Panc1 (cell line): ENCODE measurements at regions of chr9 and their contacts with region 1.

Region 1: GRCh38 chr9:27505744-27506161 is 18.3 kb upstream of the IFNK start:
- DNase-seq: no peak
- ATAC-seq: no peak
- H3K4me3 ChIP-seq: no peak overlapping the region
- H3K27ac ChIP-seq: no peak overlapping the region
- H3K4me1 ChIP-seq: no peaks in the 10 kb centered on the region
- H3K27me3 ChIP-seq: no peaks in the 10 kb centered on the region
- CTCF ChIP-seq: no peak

Region 2: DNA sequence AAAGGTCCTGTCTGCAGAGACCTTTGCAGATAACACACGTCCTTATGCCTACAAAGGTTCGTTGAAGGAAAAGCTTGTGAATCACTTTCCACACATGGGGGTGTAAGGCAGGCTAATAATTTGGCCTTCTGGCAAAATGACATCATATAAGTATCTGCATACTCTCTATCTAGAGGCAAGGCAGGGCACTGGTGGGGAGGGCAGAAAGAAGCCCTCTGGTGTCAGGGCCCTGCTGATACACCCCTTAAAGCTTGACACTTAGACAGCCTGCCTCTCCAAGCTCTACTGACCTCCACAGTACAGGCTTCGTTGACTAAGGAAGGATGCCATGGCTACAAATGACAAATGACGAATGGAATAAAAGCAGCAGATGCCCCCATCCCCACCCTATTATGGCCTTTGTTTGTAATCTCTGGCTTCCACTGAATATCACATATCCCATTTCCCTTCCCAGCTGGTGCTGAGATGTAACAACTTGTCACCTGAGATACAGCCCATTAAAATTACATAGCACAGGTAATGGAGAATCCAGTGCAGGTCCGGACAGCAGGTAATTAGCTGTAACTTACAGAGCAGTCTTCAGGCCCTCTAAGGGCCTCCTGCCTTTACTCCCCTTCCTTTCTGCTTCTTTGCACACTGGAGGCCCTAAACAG is 58.6 kb before region 1 on chr9:
- CTCF ChIA-PET with region 1: no interaction called
- POLR2A ChIA-PET with region 1: no interaction called
- in situ Hi-C with region 1: no loop called
- intact Hi-C with region 1: no loop called
- DNase-seq: no peak
- ATAC-seq: no peak
- H3K4me3 ChIP-seq: no peak overlapping the region
- H3K27ac ChIP-seq: no peak overlapping the region
- H3K4me1 ChIP-seq: no peaks in the 10 kb centered on the region
- H3K27me3 ChIP-seq: no peaks in the 10 kb centered on the region
- CTCF ChIP-seq: no peak

Region 3: GRCh38 chr9:27524236-27524635 is 18.5 kb after region 1 on chr9 and contains the start of gene IFNK:
- CTCF ChIA-PET with region 1: no interaction called
- POLR2A ChIA-PET with region 1: interaction called, 20 read pairs
- in situ Hi-C with region 1: no loop called
- intact Hi-C with region 1: no loop called
- DNase-seq: no peak
- ATAC-seq: no peak
- H3K4me3 ChIP-seq: no peak within 1 kb of the TSS
- H3K27ac ChIP-seq: no peak within 1 kb of the TSS
- H3K4me1 ChIP-seq: no peaks in the 10 kb centered on the region
- H3K27me3 ChIP-seq: no peaks in the 10 kb centered on the region
- CTCF ChIP-seq: no peak
- total RNA-seq, gene IFNK: not detected

Region 4: DNA sequence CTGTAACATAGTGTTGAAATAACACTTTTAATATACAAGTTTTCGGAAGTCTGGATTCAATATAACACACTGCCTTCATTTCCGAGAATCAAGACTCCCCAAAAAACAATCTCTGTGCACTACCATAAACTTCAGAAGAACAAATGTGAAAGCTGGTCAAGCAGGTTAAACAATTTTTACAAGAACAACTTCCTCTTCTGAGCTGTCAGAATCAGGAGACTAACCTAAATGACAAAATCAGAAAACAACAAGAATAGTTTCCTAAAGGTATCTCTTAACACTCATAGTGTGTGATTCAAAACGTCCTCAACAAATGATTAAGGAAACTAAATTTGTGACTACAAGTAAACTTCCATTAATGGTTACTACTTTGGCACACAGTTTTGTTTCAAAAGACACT is 55.9 kb after region 1 on chr9:
- CTCF ChIA-PET with region 1: no interaction called
- POLR2A ChIA-PET with region 1: no interaction called
- in situ Hi-C with region 1: no loop called
- intact Hi-C with region 1: loop called (anchors 10 kb)
- DNase-seq: no peak
- ATAC-seq: no peak
- H3K4me3 ChIP-seq: no peak overlapping the region
- H3K27ac ChIP-seq: no peak overlapping the region
- H3K4me1 ChIP-seq: no peaks in the 10 kb centered on the region
- H3K27me3 ChIP-seq: no peaks in the 10 kb centered on the region
- CTCF ChIP-seq: no peak